Ascending aorta (tissue), 2 donors: ENCODE measurements at regions of chr2 and their contacts with region 1.

Region 1: GRCh38 chr2:232697100-232697865 is at the start of gene GIGYF2:
- DNase-seq: peak; percentile 92 to 98
- H3K4me3 ChIP-seq: peak within 1 kb of the TSS; percentile 83 to 98
- H3K27ac ChIP-seq: peak within 1 kb of the TSS; percentile 93 to 96
- H3K4me1 ChIP-seq: peaks cover 7 to 22% of the 10 kb centered on the region in 2 donors
- H3K27me3 ChIP-seq: no peaks in the 10 kb centered on the region
- CTCF ChIP-seq: no peak
- total RNA-seq, gene GIGYF2: 27.5 TPM

Region 2: GRCh38 chr2:232550354-232551249 is 146.7 kb before region 1 on chr2 and contains the starts of genes EIF4E2 and TIGD1:
- intact Hi-C with region 1: loop called (anchors 2 kb)
- DNase-seq: peak; percentile 67 to 97
- H3K4me3 ChIP-seq: peak within 1 kb of the TSS; percentile 84 to 100
- H3K27ac ChIP-seq: peak within 1 kb of the TSS; percentile 97 to 100
- H3K4me1 ChIP-seq: peaks cover 4 to 5% of the 10 kb centered on the region in 2 donors
- H3K27me3 ChIP-seq: no peaks in the 10 kb centered on the region
- CTCF ChIP-seq: peak; percentile 31 to 45 (median 34)
- total RNA-seq, gene EIF4E2: 16.7 TPM
- total RNA-seq, gene TIGD1: 0.53 TPM

Region 3: GRCh38 chr2:232611551-232612218 is 85.6 kb before region 1 on chr2:
- intact Hi-C with region 1: loop called (anchors 2 kb)
- DNase-seq: peak in 1 of 2 donors; percentile 84
- H3K4me3 ChIP-seq: no peak overlapping the region
- H3K27ac ChIP-seq: peak overlapping the region in 1 of 2 donors; percentile 27
- H3K4me1 ChIP-seq: no peaks in the 10 kb centered on the region
- H3K27me3 ChIP-seq: no peaks in the 10 kb centered on the region
- CTCF ChIP-seq: peak; percentile 79 to 92 (median 89)

Region 4: GRCh38 chr2:232632908-232633732 is 64.2 kb before region 1 on chr2 and contains the start of gene EFHD1:
- intact Hi-C with region 1: loop called (anchors 1 kb)
- DNase-seq: peak; percentile 39 to 93
- H3K4me3 ChIP-seq: peak within 1 kb of the TSS; percentile 78 to 92
- H3K27ac ChIP-seq: peak within 1 kb of the TSS; percentile 90 to 99
- H3K4me1 ChIP-seq: peaks cover 0 to 29% of the 10 kb centered on the region in 2 donors
- H3K27me3 ChIP-seq: no peaks in the 10 kb centered on the region
- CTCF ChIP-seq: no peak
- total RNA-seq, gene EFHD1: 142 TPM

Region 5: DNA sequence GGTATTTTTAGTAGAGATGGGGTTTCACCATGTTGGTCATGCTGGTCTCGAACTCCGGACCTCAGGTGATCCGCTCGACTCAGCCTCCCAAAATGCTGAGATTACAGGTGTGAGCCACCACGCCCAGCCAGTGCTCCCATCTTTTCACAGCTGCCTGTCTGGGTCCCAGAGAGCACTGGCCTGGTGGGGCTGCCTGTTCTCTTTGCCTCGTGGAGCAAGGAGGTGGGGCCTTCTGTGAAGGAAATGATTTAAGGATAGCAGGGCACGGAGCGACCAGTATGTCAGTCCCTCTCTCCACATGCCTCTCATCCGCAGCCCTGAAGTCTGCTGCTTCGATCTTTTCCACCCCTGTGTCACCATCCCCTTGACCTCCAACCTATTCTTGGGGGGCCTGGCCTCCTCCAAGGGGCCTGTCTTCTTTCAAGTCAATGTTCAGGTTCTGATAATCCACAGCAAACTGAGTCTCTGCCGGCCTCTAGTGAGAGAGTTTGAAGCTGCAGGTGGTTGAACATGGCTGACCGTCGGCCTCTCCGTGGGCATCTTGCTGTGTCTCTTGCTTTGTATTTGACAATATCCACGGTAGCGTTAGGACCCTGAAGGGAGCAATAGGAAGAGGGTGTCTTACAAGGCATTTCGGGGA is 28.4 kb before region 1 on chr2:
- intact Hi-C with region 1: loop called (anchors 2 kb)
- DNase-seq: no peak
- H3K4me3 ChIP-seq: peak overlapping the region in 1 of 2 donors; percentile 31
- H3K27ac ChIP-seq: peak overlapping the region; percentile 66 to 85
- H3K4me1 ChIP-seq: peaks cover 9 to 32% of the 10 kb centered on the region in 2 donors
- H3K27me3 ChIP-seq: no peaks in the 10 kb centered on the region
- CTCF ChIP-seq: peak; percentile 56 to 75 (median 61)

Region 6: DNA sequence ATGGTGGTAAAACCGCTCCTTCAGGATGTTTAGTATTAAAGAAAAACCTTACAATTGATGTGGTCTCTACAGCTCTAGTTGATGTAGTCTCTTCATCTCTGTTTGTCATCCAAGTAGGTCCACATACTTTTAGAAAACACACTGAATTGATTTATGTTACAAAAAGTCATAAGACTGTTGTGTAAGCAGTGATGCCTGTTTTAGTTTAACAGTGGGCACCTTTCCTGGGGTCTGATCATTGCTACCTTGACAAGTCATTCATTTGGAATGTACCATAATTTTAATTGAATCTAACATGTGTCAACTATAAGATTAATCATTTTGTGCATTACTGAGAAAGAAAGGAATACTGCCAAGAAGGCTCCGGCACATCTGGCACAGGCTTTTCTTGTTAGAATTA is 34.2 kb after region 1 on chr2:
- intact Hi-C with region 1: no loop called
- DNase-seq: no peak
- H3K4me3 ChIP-seq: no peak overlapping the region
- H3K27ac ChIP-seq: no peak overlapping the region
- H3K4me1 ChIP-seq: peaks cover 0 to 4% of the 10 kb centered on the region in 2 donors
- H3K27me3 ChIP-seq: no peaks in the 10 kb centered on the region
- CTCF ChIP-seq: no peak